ENCODE measurements at regions of chr11 and their contacts with region 1.

Region 1: GRCh38 chr11:64304316-64305072 is 830 bp upstream of the ESRRA start:
- DNase-seq: peak; percentile 95
- ATAC-seq: peak; percentile 30
- H3K4me3 ChIP-seq: peak overlapping the region; percentile 74
- H3K27ac ChIP-seq: peak overlapping the region; percentile 85
- H3K4me1 ChIP-seq: peaks cover 35% of the 10 kb centered on the region
- H3K27me3 ChIP-seq: peaks cover 12% of the 10 kb centered on the region
- CTCF ChIP-seq: peak; percentile 99

Region 2: DNA sequence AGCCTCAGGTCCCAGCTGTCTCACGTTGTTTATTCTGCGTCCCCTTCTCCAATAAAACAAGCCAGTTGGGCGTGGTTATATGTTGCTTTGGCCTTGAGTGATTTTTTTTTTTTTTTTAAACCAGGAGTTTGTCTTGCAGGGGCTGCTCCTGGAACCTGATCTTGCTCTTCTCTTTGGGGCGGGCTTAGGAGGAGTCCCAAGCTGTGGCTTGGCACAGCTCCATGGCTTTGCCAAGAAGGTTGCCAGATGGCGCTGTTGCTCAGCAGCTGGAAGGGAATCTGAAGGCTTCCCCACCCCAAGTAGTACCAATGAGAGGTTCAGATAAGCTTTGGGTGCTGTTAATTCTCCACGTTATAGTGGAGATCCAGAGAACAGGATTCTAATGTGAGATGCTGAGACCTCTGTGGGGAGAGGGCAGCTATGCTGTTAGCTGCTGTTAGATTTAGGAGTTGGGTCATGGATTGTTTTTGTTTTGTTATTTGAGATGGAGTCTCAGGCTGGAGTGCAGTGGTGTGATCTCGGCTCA is 100.0 kb before region 1 on chr11:
- CTCF ChIA-PET with region 1: interaction called, 12 read pairs
- POLR2A ChIA-PET with region 1: no interaction called
- intact Hi-C with region 1: loop called (anchors 2 kb)
- DNase-seq: peak; percentile 98
- ATAC-seq: peak; percentile 73
- H3K4me3 ChIP-seq: no peak overlapping the region
- H3K27ac ChIP-seq: no peak overlapping the region
- H3K4me1 ChIP-seq: 0 out of 2 replicates have a peak, but pooled peaks cover 3% of the 10 kb centered on the region
- H3K27me3 ChIP-seq: no peaks in the 10 kb centered on the region
- CTCF ChIP-seq: peak; percentile 96

Region 3: DNA sequence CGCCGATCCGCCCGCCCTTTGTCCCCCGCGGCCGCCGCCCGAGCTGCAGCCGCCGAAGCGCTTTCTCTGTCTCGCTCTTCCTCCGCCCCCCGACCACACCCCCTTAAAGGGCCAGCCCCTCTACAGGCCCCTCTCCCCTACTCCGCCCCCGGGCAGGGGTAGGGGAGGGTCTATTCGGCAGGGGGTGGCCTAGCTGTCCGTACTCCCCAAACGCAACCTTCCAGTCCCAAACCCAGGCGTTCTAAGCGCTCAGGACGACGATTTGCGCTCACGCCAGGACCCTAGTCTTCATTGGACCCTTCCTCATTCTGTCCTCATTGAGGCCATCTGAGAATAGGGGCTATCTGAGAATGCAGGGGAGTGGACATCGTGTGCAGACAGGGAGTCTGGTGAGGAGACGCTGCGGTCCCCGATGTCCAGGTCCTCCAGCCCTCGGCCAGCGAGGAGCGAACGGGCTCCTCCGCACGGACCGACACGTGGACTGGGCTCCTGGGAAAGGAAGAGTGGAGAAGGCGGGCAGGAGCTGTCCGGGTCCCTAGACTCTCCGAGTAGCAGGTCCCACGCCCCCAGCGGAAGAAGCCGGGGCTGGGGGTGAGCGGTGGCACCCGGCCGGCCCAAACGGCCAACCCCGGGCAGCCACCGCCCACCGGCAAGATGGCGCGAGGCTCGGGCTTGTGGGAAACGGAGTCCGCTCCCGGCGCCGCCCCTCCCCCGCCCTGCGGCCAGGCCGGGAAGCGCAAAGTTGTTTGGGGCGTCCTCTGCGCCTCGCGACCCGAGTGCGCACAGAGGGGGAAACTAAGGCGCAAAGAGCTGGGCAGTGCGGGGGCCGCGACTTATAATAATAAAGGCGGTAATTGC is 57.4 kb before region 1 on chr11 and contains the start of gene PPP1R14B:
- CTCF ChIA-PET with region 1: interaction called, 5 read pairs
- POLR2A ChIA-PET with region 1: no interaction called
- intact Hi-C with region 1: loop called (anchors 2 kb)
- DNase-seq: peak; percentile 91
- ATAC-seq: peak; percentile 41
- H3K4me3 ChIP-seq: peak within 1 kb of the TSS; percentile 80
- H3K27ac ChIP-seq: peak within 1 kb of the TSS; percentile 94
- H3K4me1 ChIP-seq: peaks cover 49% of the 10 kb centered on the region
- H3K27me3 ChIP-seq: no peaks in the 10 kb centered on the region
- CTCF ChIP-seq: no peak
- total RNA-seq, gene PPP1R14B: 1,496 and 2,060 TPM in 2 replicates

Region 4: GRCh38 chr11:64276653-64277431 is 27.7 kb before region 1 on chr11:
- CTCF ChIA-PET with region 1: interaction called, 13 read pairs
- POLR2A ChIA-PET with region 1: interaction called, 5 read pairs
- intact Hi-C with region 1: loop called (anchors 2 kb)
- DNase-seq: peak; percentile 91
- ATAC-seq: peak; percentile 97
- H3K4me3 ChIP-seq: no peak overlapping the region
- H3K27ac ChIP-seq: peak overlapping the region; percentile 32
- H3K4me1 ChIP-seq: peaks cover 21% of the 10 kb centered on the region
- H3K27me3 ChIP-seq: no peaks in the 10 kb centered on the region
- CTCF ChIP-seq: no peak

Region 5: GRCh38 chr11:64317957-64318693 is 13.6 kb after region 1 on chr11 and contains the start of gene PRDX5:
- CTCF ChIA-PET with region 1: interaction called, 12 read pairs
- POLR2A ChIA-PET with region 1: interaction called, 27 read pairs
- intact Hi-C with region 1: loop called (anchors 1 kb)
- DNase-seq: peak; percentile 99
- ATAC-seq: peak; percentile 76
- H3K4me3 ChIP-seq: peak within 1 kb of the TSS; percentile 83
- H3K27ac ChIP-seq: peak within 1 kb of the TSS; percentile 94
- H3K4me1 ChIP-seq: peaks cover 28% of the 10 kb centered on the region
- H3K27me3 ChIP-seq: no peaks in the 10 kb centered on the region
- CTCF ChIP-seq: peak; percentile 60
- total RNA-seq, gene PRDX5: 467 and 585 TPM in 2 replicates

Region 6: GRCh38 chr11:64358907-64359711 is 54.6 kb after region 1 on chr11 and contains the start of gene RPS6KA4:
- CTCF ChIA-PET with region 1: interaction called, 20 read pairs
- POLR2A ChIA-PET with region 1: interaction called, 20 read pairs
- intact Hi-C with region 1: loop called (anchors 1 kb)
- DNase-seq: peak; percentile 82
- ATAC-seq: peak; percentile 69
- H3K4me3 ChIP-seq: peak within 1 kb of the TSS; percentile 92
- H3K27ac ChIP-seq: peak within 1 kb of the TSS; percentile 40
- H3K4me1 ChIP-seq: peaks cover 36% of the 10 kb centered on the region
- H3K27me3 ChIP-seq: no peaks in the 10 kb centered on the region
- CTCF ChIP-seq: no peak; the same call in 1 of the 2 replicates
- total RNA-seq, gene RPS6KA4: 148 and 189 TPM in 2 replicates

Region 7: DNA sequence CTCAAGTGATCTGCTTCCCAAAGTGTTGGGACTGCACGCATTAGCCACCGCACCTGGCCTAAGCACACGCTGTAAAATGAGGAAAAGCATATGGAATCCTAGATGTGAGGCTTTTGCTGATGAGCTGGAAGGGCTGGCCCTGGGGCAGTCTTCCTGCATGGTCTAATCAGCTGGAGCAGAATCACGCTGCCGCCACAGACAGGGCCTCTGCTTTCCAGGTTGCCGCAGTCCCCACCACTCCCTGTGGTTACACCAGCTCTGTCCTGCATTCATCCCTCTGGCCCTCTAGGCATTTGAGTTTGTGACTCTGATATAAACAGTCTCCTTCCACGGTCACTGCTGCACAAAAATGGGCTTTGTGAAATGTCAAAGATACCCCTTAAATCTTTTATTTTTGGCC is 71.6 kb after region 1 on chr11:
- CTCF ChIA-PET with region 1: no interaction called
- POLR2A ChIA-PET with region 1: no interaction called
- intact Hi-C with region 1: no loop called
- DNase-seq: no peak
- ATAC-seq: no peak
- H3K4me3 ChIP-seq: no peak overlapping the region
- H3K27ac ChIP-seq: no peak overlapping the region
- H3K4me1 ChIP-seq: peaks cover 5% of the 10 kb centered on the region; the same call in 1 of the 2 replicates
- H3K27me3 ChIP-seq: no peaks in the 10 kb centered on the region
- CTCF ChIP-seq: no peak